T-cell (primary cell): ENCODE measurements at regions of chr17 and their contacts with region 1.

Region 1: DNA sequence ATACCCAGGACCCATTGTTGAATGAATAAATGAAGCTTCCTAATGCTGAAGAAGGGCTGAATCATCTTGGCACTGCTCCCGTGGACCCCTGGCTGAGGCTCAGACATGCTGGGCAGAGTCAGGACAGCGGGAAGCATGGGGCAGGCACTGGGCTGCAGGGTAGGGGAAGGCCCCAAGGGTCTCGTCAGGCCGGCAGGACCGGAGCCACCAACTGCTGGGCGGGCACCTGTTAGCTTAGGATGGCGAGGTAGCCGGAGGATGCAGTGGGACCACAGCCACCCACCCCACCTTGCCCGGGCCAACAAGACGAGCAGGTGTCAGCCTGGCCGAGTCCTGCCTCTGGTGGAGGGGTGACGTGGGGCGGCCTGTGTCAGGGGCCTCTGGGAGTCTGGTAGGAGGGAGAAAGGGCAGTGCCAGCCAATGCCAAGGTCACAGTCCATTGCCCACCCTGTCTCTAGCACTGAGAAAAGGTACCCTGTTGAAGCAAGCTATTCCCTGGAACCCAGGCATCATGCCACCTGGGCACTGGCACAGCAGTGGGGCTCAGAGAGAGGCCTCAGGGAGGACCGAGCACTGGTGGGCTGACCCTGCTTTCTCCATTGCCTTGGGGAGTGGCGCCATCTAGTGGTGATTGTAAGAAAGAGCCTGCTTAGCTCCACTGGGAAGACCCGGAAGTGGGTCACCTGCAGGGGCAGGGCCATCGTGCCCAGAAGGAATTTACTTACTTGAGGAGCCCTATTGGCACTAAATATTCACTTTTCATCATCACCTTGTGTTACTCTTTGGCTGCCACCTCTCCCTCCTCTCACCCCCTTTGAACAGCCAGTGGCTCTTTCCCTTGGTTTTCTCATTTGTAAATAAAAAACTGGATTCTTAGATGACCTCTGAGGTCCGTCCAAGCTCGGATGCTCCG is 3.0 kb upstream of the DLX3 start:
- DNase-seq: peak; percentile 63 to 95 (median 79)
- ATAC-seq: peak; percentile 68 to 86 (median 73)
- H3K4me3 ChIP-seq: no peak overlapping the region
- H3K4me3 Mint-ChIP-seq: no peak overlapping the region
- H3K27ac ChIP-seq: no peak overlapping the region
- H3K27ac Mint-ChIP-seq: no peak overlapping the region
- H3K4me1 ChIP-seq: peaks cover 3 to 44% of the 10 kb centered on the region in 2 experiments
- H3K4me1 Mint-ChIP-seq: peaks cover 28 to 40% (median 29%) of the 10 kb centered on the region in 3 donors
- H3K27me3 ChIP-seq: peaks cover 24 to 80% of the 10 kb centered on the region in 2 experiments
- H3K27me3 Mint-ChIP-seq: peaks cover 50 to 80% of the 10 kb centered on the region in 2 donors

Region 2: DNA sequence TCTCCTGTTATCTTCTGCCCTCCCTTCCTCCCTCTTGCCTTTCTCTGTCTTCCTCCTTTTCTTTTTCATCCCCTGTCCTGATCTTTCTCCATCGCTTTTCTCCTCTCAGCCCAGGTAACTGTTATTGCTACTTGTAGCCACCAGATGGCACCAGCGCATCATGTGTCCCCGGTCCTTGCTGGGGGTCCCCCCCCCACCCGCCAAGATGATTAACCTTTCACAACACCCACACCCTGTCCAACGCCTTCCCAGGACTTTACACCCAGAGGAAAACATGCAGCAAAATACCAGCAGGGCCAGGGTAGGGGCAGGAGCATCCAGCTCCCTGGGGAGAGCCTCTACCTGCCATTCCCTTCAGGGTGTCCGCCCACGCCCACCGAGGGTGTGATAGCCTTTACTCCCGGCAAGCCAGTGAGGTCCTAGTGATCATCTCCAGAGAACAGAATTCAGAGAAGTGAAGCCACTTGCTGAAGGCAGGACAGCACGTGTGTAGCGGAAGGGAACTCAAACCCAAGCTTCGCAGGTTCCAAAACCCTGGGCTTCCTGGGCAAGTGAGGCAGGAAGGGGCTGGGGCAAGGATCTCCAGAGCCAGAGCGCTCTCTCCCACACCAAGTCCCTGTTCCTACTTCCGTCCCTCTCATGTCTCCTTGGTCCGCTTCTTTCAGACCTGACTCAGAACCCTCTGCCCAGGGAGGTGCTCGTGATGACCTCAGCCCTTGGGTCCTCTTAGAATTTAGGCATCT is 136.7 kb before region 1 on chr17:
- CTCF ChIA-PET with region 1: interaction called, 26 read pairs
- POLR2A ChIA-PET with region 1: no interaction called
- DNase-seq: peak; percentile 15 to 81 (median 46)
- ATAC-seq: peak; percentile 58 to 74 (median 64)
- H3K4me3 ChIP-seq: no peak overlapping the region
- H3K4me3 Mint-ChIP-seq: no peak overlapping the region
- H3K27ac ChIP-seq: no peak overlapping the region
- H3K27ac Mint-ChIP-seq: no peak overlapping the region
- H3K4me1 ChIP-seq: peaks cover 0 to 10% of the 10 kb centered on the region in 2 experiments
- H3K4me1 Mint-ChIP-seq: peaks cover 3 to 7% (median 4%) of the 10 kb centered on the region in 3 donors
- H3K27me3 ChIP-seq: peaks cover 2 to 31% of the 10 kb centered on the region in 2 experiments
- H3K27me3 Mint-ChIP-seq: peaks cover 5 to 13% of the 10 kb centered on the region in 2 donors

Region 3: DNA sequence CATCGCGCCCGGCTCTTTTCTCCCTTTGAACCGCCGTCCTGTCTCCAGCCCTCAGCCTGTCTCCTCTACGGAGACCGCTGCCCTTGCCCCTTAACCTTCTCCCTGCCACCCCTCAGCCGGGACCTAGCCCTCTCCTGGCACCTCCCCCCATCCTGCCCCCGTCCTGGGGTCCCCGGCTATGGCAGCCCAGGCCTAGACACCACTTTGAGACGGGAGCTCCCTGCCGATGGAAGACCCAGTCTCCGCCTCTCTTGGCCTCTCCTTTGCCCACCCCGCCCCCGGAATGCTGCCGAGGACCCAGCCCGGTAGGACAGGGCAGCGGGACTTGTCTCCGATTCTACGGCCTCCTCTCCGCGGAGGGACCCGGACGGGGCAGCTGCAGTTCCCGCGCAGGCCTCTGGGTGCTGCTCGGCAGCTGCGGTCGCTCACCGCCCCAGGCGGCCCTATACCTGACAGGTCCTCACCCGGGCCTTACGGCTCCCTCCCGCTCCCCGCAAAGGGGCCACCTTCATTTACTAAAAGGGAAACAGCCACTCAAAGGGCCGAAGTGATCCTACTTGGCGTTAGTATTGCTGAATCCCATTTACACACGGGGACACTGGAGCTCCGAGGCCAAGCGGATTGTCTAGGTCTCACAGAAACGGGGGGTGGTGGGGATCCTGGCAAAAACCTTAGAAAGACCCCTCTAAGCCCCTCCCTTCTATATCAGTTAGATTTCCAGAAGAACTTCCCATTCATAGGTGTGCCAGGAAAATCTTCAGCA is 117.6 kb before region 1 on chr17:
- CTCF ChIA-PET with region 1: interaction called, 13 to 15 read pairs
- POLR2A ChIA-PET with region 1: no interaction called
- DNase-seq: peak; percentile 12 to 77 (median 60)
- ATAC-seq: peak; percentile 94 to 97 (median 96)
- H3K4me3 ChIP-seq: no peak overlapping the region
- H3K4me3 Mint-ChIP-seq: peak overlapping the region; percentile 9 to 58 (median 47)
- H3K27ac ChIP-seq: no peak overlapping the region
- H3K27ac Mint-ChIP-seq: no peak overlapping the region
- H3K4me1 ChIP-seq: peaks cover 0 to 11% of the 10 kb centered on the region in 2 experiments
- H3K4me1 Mint-ChIP-seq: peaks cover 4 to 8% (median 7%) of the 10 kb centered on the region in 3 donors
- H3K27me3 ChIP-seq: peaks cover 15 to 60% of the 10 kb centered on the region in 2 experiments
- H3K27me3 Mint-ChIP-seq: peaks cover 35 to 60% of the 10 kb centered on the region in 2 donors

Region 4: DNA sequence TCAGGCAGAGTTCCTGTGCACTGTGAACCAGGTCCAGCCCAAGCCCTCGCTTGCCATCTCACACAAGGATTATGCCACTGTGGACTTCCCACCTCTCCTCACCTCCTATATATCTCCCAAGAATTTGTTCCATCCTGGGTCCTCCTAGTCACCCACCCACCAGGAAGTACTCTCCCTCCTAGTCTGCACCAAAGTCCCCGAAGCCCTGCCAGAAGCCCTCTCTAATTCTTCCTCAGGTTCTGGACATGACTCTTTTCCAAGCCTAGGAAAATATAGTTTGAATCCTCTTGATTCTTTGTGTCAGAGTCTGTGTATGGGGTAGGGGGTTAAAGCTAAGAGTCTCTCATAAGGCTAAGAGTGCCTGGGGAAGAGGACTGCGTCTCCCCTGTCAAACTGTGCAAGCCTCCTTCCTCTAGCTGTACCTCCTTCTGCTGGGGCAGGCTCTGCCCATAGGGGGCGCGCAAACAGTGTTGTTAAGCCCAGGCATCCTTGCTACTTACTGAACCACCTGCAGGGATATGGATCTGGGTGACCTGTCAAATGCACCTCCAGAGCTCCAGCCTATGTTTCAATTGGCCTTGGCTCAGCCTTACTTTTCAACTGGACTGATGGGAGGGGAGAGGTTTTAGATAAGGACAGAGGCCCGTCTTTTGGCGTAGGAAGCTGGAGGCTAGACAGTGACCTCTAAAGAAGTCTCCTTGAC is 45.7 kb before region 1 on chr17:
- CTCF ChIA-PET with region 1: interaction called, 13 to 33 read pairs
- POLR2A ChIA-PET with region 1: no interaction called
- DNase-seq: peak; percentile 58 to 86 (median 77)
- ATAC-seq: peak; percentile 88 to 100 (median 92)
- H3K4me3 ChIP-seq: no peak overlapping the region
- H3K4me3 Mint-ChIP-seq: no peak overlapping the region
- H3K27ac ChIP-seq: no peak overlapping the region
- H3K27ac Mint-ChIP-seq: no peak overlapping the region
- H3K4me1 ChIP-seq: no peaks in the 10 kb centered on the region
- H3K4me1 Mint-ChIP-seq: no peaks in the 10 kb centered on the region
- H3K27me3 ChIP-seq: peaks cover 6 to 70% of the 10 kb centered on the region in 2 experiments
- H3K27me3 Mint-ChIP-seq: peaks cover 47 to 64% of the 10 kb centered on the region in 2 donors

Region 5: GRCh38 chr17:50047488-50048126 is 49.6 kb after region 1 on chr17:
- CTCF ChIA-PET with region 1: no interaction called
- POLR2A ChIA-PET with region 1: no interaction called
- DNase-seq: no peak
- ATAC-seq: no peak
- H3K4me3 ChIP-seq: no peak overlapping the region
- H3K4me3 Mint-ChIP-seq: no peak overlapping the region
- H3K27ac ChIP-seq: no peak overlapping the region
- H3K27ac Mint-ChIP-seq: no peak overlapping the region
- H3K4me1 ChIP-seq: peaks cover 0 to 7% of the 10 kb centered on the region in 2 experiments
- H3K4me1 Mint-ChIP-seq: peaks cover 0 to 11% (median 10%) of the 10 kb centered on the region in 3 donors
- H3K27me3 ChIP-seq: peaks cover 0 to 43% of the 10 kb centered on the region in 2 experiments
- H3K27me3 Mint-ChIP-seq: peaks cover 5 to 25% of the 10 kb centered on the region in 2 donors

Region 6: DNA sequence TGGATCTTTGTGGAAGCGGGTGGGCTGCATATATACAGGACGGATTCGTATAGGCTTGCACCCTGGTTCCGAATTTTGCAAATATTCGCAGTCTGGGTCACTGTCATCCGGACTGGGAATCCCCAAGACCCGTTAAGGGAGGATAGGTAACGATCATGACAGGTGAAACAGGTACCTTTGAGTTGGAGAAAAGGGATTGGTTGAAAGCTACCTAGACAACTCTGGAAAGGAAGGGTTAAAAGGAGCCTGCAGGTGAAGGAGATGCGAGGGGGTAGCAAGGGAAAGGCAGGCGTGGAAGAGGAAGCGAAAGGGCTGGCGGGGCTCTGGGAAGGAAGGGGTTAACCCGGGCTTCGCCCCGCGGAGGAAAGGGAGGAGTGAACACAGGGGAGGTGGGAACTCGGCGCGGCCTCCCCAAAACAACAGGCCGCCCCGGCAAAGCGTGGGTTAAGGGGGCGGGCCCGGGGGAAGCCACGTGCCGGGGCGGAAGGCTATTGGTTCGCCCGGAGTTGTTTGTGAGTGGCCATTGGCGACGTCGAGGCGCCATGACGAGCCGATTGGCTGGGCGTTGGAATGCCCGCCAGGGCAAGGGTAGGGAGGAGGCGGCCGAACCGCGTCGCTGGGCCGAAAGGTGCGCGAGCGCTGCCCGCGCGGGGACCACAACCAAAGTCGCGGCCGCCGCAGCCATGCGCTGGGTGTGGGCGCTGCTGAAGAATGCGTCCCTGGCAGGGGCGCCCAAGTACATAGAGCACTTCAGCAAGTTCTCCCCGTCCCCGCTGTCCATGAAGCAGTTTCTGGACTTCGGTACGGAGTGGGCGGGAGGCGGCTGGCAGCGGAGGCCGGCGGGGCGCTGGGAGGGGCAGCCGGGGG is 96.9 kb after region 1 on chr17 and contains the start of gene PDK2:
- CTCF ChIA-PET with region 1: interaction called in 1 of 2 experiments, 5 read pairs
- POLR2A ChIA-PET with region 1: interaction called in 1 of 2 experiments, 10 read pairs
- DNase-seq: peak; percentile 93 to 98 (median 96)
- ATAC-seq: peak; percentile 89 to 96 (median 91)
- H3K4me3 ChIP-seq: peak within 1 kb of the TSS; percentile 59 to 82
- H3K4me3 Mint-ChIP-seq: peak within 1 kb of the TSS; percentile 95 to 97 (median 95)
- H3K27ac ChIP-seq: peak within 1 kb of the TSS; percentile 58
- H3K27ac Mint-ChIP-seq: peak within 1 kb of the TSS; percentile 96
- H3K4me1 ChIP-seq: peaks cover 5 to 29% of the 10 kb centered on the region in 2 experiments
- H3K4me1 Mint-ChIP-seq: peaks cover 35 to 58% (median 36%) of the 10 kb centered on the region in 3 donors
- H3K27me3 ChIP-seq: peaks cover 0 to 5% of the 10 kb centered on the region in 2 experiments
- H3K27me3 Mint-ChIP-seq: no peaks in the 10 kb centered on the region
- total RNA-seq, gene PDK2: 18.8 to 37.2 (median 30.0) TPM